ENCODE measurements at regions of chr2 and their contacts with region 1.

Region 1: DNA sequence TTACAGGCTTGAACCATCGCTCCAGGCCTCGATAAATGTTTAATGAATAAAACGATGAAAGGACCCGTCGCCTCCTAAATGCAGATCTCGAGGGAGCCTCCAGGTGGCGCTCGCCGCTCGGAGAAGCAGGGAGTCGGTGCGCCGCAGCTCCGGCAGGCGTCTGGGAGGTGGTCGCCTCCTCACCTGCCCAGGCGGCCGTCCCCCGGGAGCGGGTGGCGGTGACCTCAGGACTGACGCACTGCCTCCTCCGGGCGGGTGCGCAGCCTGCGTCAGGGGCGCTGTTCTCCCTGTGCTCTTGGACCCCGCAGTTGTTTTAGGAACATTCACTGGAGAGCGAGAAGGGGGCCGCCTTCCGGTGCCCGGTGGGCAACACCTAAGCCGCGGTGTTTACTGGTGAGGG is 38.6 kb upstream of the POLE4 start:
- DNase-seq: peak; percentile 32 to 71
- H3K4me3 ChIP-seq: peak overlapping the region in 1 of 2 donors; percentile 7
- H3K27ac ChIP-seq: no peak overlapping the region
- H3K4me1 ChIP-seq: peaks cover 0 to 6% (median 2%) of the 10 kb centered on the region in 4 donors
- H3K27me3 ChIP-seq: peaks cover 0 to 17% of the 10 kb centered on the region in 2 donors
- CTCF ChIP-seq: peak; percentile 63 to 70

Region 2: DNA sequence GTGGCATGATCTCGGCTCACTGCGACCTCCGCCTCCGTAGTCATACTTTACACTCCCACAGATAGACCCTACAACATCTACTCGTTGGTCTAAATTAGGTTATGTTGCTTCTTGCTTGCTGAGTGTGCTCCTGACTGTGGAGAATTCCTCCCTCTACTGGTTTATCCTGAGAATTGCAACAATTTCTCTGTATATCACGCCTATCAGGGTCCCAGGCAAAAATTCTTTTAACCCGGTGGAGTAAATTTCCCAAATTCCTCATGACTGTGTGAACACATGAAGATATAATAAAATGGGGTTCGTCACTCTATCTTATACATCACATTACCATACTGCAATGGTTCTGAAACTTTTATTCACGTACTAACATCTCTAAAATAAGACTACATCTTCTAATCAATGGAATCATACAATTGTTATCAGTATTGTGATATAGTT is 484.2 kb after region 1 on chr2:
- intact Hi-C with region 1: loop called (anchors 5 kb)
- DNase-seq: no peak
- H3K4me3 ChIP-seq: no peak overlapping the region
- H3K27ac ChIP-seq: no peak overlapping the region
- H3K4me1 ChIP-seq: no peaks in the 10 kb centered on the region
- H3K27me3 ChIP-seq: peaks cover 0 to 8% of the 10 kb centered on the region in 2 donors
- CTCF ChIP-seq: peak; percentile 59 to 70

Measured in tibial artery (tissue), 4 donors.